ENCODE measurements at regions of chr7 and their contacts with region 1.

Region 1: GRCh38 chr7:26864309-26865093 is at the start of gene SKAP2:
- DNase-seq: peak; percentile 98 to 99
- ATAC-seq: peak; percentile 98 to 99 (median 99)
- H3K4me3 ChIP-seq: peak within 1 kb of the TSS; percentile 87
- H3K27ac ChIP-seq: peak within 1 kb of the TSS; percentile 87
- H3K4me1 ChIP-seq: peaks cover 5% of the 10 kb centered on the region
- H3K27me3 ChIP-seq: peaks cover 0 to 12% (median 3%) of the 10 kb centered on the region in 3 donors
- CTCF ChIP-seq: no peak
- total RNA-seq, gene SKAP2: 8.2 to 19.4 (median 10.5) TPM

Region 2: GRCh38 chr7:26880852-26881251 is 16.4 kb after region 1 on chr7:
- intact Hi-C with region 1: no loop called
- DNase-seq: no peak
- ATAC-seq: no peak
- H3K4me3 ChIP-seq: no peak overlapping the region
- H3K27ac ChIP-seq: no peak overlapping the region
- H3K4me1 ChIP-seq: no peaks in the 10 kb centered on the region
- H3K27me3 ChIP-seq: no peaks in the 10 kb centered on the region
- CTCF ChIP-seq: no peak

Region 3: DNA sequence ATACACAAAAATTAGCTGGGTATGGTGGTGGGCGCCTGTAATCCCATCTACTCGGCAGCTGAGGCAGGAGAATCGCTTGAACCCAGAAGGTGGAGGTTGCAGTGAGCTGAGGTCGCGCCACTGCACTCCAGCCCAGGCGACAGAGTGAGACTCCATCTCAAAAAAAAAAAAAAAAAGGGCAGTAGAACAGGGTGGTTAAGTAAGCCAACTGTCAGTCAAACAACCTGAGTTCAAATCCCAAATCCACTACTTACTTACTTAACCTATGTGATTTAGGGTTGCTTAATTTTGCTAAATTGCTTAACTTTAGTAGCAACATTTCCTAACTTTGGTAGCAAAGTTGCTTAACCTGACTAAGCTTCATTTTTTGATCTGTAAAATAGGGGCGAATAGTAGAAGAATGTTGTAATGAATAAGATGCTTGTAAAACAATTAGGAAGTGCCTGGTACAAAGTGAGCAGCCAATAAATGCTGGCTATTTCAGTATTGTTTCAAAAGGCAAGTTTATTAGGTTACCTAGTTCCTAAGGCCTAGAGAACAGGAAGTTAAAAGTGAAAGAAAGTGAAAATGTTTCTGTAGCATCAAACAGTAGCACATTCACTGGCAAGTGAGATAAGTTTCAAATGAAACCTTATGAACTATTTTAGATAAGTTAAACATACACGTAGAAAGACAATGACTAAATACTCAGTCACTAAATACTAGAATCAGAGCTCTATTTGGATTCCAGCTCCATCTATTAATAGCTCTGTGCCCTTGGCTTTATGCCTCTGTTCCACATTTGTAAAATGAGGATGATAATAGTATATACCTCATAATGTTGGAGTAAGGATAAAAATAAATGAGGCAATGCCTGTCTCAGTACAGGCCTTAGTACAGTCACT is 167.0 kb after region 1 on chr7:
- intact Hi-C with region 1: loop called in 1 of 2 experiments (anchors 5 kb)
- DNase-seq: no peak
- ATAC-seq: peak; percentile 76 to 98 (median 95)
- H3K4me3 ChIP-seq: no peak overlapping the region
- H3K27ac ChIP-seq: peak overlapping the region; percentile 69
- H3K4me1 ChIP-seq: peaks cover 20% of the 10 kb centered on the region
- H3K27me3 ChIP-seq: no peaks in the 10 kb centered on the region
- CTCF ChIP-seq: no peak

Region 4: GRCh38 chr7:27095897-27096767 is 231.6 kb after region 1 on chr7 and contains the start of gene HOXA1:
- intact Hi-C with region 1: loop called in 1 of 2 experiments (anchors 2 kb)
- DNase-seq: peak; percentile 83 to 89
- ATAC-seq: peak; percentile 72 to 89 (median 84)
- H3K4me3 ChIP-seq: peak within 1 kb of the TSS; percentile 98
- H3K27ac ChIP-seq: peak within 1 kb of the TSS; percentile 73
- H3K4me1 ChIP-seq: peaks cover 12% of the 10 kb centered on the region
- H3K27me3 ChIP-seq: no peaks in the 10 kb centered on the region
- CTCF ChIP-seq: no peak
- total RNA-seq, gene HOXA1: 0.17 to 0.21 TPM in 2 of 4 donors, not detected in the others

Region 5: DNA sequence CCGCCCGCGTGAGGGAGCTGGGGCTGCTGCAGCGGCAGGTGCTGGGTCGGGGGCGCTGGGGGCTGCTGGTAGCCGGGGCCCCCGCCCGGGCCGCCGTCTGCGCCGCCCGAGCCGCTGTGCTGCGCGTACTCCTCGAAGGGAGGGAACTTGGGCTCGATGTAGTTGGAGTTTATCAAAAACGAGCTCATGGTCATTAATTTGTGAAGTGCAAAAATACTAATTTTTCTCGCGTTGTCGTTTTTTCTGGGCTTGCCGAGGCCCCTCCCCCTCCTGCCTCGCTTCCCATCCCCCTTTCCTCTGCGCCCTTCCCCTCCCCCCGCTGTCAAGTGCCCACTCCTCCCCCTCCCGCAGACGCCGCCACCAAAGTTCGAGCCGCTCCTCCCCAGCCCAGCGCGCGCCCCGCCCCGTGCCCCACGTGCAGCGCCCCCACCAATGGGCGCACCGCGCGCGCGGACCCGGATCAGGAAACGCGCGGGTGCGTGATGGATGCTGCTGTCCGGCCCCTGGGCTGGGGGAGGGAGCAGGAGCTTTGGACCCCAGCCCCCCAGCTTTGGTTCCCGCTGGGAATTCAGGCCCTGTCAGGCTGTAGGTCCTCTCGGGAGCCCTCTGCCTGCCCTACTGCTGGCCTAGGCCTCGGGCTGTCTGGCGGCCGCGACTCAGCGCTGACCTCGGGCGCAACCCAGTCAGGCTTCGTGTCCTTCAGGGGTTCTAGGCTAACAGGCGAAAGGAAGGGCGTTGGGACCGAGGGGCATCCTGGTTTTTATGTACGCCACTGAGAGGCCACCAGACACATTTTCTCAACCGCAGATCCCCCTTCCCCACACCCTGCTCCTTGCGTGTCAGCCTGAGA is 266.3 kb after region 1 on chr7 and contains the start of gene HOXA4:
- intact Hi-C with region 1: loop called in 1 of 2 experiments (anchors 1 kb)
- DNase-seq: peak; percentile 96 to 97
- ATAC-seq: peak; percentile 93 to 97 (median 94)
- H3K4me3 ChIP-seq: peak within 1 kb of the TSS; percentile 92
- H3K27ac ChIP-seq: peak within 1 kb of the TSS; percentile 94
- H3K4me1 ChIP-seq: peaks cover 71% of the 10 kb centered on the region
- H3K27me3 ChIP-seq: no peaks in the 10 kb centered on the region
- CTCF ChIP-seq: no peak
- total RNA-seq, gene HOXA4: 7.2 to 11.5 (median 9.1) TPM

Region 6: DNA sequence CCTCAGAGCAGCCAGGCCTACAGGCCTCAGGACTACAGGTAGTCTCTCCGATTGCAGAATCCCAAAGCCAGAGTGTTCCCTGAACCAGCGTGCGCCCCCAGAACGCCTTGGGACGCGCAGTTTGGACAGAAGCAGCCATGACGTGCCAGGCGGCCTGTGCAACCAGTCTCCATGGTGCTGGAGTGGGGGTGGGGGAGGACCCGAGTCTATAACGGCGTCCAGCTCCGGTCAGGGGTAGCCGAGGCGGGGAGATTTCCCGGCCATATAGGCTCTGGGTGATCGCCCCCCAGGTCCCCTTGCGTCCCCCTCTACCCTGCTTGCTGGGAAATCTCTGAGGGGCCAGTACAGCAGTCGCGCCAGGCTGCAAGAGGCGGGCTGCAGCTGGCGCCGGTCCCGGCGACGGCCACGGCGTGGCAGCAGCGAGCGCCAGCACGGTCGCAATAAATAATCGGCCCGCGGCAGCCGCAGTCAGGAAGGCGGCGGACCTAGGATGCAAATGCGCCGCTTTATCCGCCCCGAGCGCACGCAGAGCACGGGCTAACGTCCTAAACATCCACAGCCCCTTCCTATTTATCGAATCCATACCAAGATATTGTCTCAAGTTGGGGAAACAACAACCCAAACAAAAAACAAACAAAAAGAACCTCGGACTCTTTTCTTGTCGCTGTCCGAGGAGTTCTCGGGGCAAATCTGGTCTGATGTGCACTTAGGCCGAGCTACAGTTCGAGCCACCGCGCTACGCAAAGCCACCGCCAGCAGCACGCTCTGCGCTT is 286.3 kb after region 1 on chr7:
- intact Hi-C with region 1: no loop called
- DNase-seq: peak; percentile 84 to 93
- ATAC-seq: peak; percentile 73 to 81 (median 75)
- H3K4me3 ChIP-seq: peak overlapping the region; percentile 75
- H3K27ac ChIP-seq: peak overlapping the region; percentile 84
- H3K4me1 ChIP-seq: peaks cover 35% of the 10 kb centered on the region
- H3K27me3 ChIP-seq: no peaks in the 10 kb centered on the region
- CTCF ChIP-seq: peak; percentile 84